ENCODE measurements at regions of chr4 and their contacts with region 1.

Region 1: DNA sequence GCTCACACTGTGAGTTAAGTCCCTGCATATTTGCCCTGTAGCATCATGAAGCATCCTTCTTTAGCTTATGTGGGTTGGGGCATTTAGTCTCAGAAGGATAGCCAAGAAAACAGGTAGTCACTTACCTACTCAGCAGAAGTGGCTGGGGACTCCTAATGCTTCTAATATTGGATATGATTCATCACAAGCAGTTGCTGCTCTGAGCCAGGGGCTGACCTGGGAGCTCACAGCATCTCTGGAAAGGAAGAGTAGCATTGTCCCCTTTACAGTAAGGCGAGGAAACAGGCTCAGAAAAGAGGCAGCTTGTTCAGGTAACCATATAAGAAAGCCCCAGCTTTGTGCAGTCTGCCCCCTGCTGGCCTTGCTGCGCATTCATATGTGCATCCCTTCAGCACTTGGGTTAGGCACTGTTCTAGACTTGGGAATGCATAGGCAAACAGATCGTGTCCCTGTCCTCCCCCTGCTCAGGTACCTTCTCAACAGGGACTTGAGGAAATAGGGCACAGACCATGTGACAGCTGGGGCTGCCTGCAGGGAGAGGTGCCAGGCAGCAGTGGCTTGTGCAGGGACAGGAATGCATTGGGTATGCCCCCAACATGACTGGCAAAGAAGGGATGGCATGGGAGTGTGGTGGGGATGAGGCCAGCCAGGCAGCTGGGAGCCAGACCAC is 35.7 kb upstream of the TBC1D14 start:
- DNase-seq: peak; percentile 50
- ATAC-seq: peak; percentile 74
- H3K4me3 Mint-ChIP-seq: no peak overlapping the region
- H3K27ac Mint-ChIP-seq: no peak overlapping the region
- H3K4me1 Mint-ChIP-seq: peaks cover 12% of the 10 kb centered on the region
- H3K27me3 Mint-ChIP-seq: no peaks in the 10 kb centered on the region
- CTCF ChIP-seq: no peak

Region 2: GRCh38 chr4:6574747-6575502 is 299.0 kb before region 1 on chr4 and contains the start of gene MAN2B2:
- CTCF ChIA-PET with region 1: no interaction called
- POLR2A ChIA-PET with region 1: no interaction called
- intact Hi-C with region 1: loop called (anchors 10 kb)
- DNase-seq: peak; percentile 86
- ATAC-seq: peak; percentile 96
- H3K4me3 Mint-ChIP-seq: peak within 1 kb of the TSS; percentile 88
- H3K27ac Mint-ChIP-seq: peak within 1 kb of the TSS; percentile 74
- H3K4me1 Mint-ChIP-seq: peaks cover 14% of the 10 kb centered on the region
- H3K27me3 Mint-ChIP-seq: no peaks in the 10 kb centered on the region
- CTCF ChIP-seq: no peak
- total RNA-seq, gene MAN2B2: 24.2 and 24.7 TPM in 2 replicates

Region 3: GRCh38 chr4:6859543-6859942 is 14.4 kb before region 1 on chr4:
- CTCF ChIA-PET with region 1: interaction called, 14 read pairs
- POLR2A ChIA-PET with region 1: no interaction called
- intact Hi-C with region 1: no loop called
- DNase-seq: no peak
- ATAC-seq: no peak
- H3K4me3 Mint-ChIP-seq: no peak overlapping the region
- H3K27ac Mint-ChIP-seq: no peak overlapping the region
- H3K4me1 Mint-ChIP-seq: peaks cover 10% of the 10 kb centered on the region
- H3K27me3 Mint-ChIP-seq: no peaks in the 10 kb centered on the region
- CTCF ChIP-seq: no peak

Region 4: GRCh38 chr4:6885951-6886557 is 12.1 kb after region 1 on chr4:
- CTCF ChIA-PET with region 1: interaction called, 17 read pairs
- POLR2A ChIA-PET with region 1: no interaction called
- intact Hi-C with region 1: no loop called
- DNase-seq: no peak
- ATAC-seq: peak; percentile 49
- H3K4me3 Mint-ChIP-seq: no peak overlapping the region
- H3K27ac Mint-ChIP-seq: no peak overlapping the region
- H3K4me1 Mint-ChIP-seq: peaks cover 11% of the 10 kb centered on the region
- H3K27me3 Mint-ChIP-seq: no peaks in the 10 kb centered on the region
- CTCF ChIP-seq: no peak